GM12878 (cell line): ENCODE measurements at regions of chr3 and their contacts with region 1.

Region 1: GRCh38 chr3:122305818-122306621 is 19.0 kb upstream of the CSTA start:
- DNase-seq: no peak
- ATAC-seq: peak; percentile 93
- H3K4me3 ChIP-seq: no peak overlapping the region
- H3K27ac ChIP-seq: no peak overlapping the region
- H3K4me1 ChIP-seq: peaks cover 30% of the 10 kb centered on the region
- H3K27me3 ChIP-seq: no peaks in the 10 kb centered on the region
- CTCF ChIP-seq: peak; percentile 30 to 57 (median 35); a peak in 4 of 6 replicates
- EP300 ChIP-seq: no peak
- POLR2A ChIP-seq: no peak
- RAD21 ChIP-seq: peak; percentile 62

Region 2: DNA sequence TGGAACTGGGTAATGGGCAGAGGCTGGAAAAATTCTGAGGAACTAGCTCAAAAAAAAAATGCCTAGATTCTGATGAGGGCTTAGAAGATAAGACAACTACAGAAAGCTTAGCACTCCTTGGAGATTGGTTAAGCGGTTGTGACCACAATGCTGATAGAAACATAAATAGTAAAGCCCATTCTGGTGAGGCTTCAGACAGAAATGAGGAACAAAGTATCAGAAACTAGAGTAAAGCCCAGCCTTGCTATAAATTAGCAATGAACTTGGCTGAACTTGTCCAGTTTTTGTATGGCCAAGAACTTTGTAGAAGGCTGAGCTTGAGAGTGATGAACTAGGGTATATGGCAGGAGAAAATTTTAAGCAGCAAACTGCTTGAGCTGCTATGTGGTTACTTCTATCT is 581.9 kb before region 1 on chr3:
- CTCF ChIA-PET with region 1: no interaction called
- POLR2A ChIA-PET with region 1: no interaction called
- RAD21 ChIA-PET with region 1: no interaction called
- SMC1A ChIA-PET with region 1: no interaction called
- in situ Hi-C with region 1: no loop called
- intact Hi-C with region 1: no loop called
- DNase-seq: peak; percentile 57
- ATAC-seq: peak; percentile 96
- H3K4me3 ChIP-seq: no peak overlapping the region
- H3K27ac ChIP-seq: no peak overlapping the region
- H3K4me1 ChIP-seq: peaks cover 11% of the 10 kb centered on the region
- H3K27me3 ChIP-seq: no peaks in the 10 kb centered on the region
- CTCF ChIP-seq: no peak
- EP300 ChIP-seq: no peak
- POLR2A ChIP-seq: no peak
- RAD21 ChIP-seq: no peak

Region 3: GRCh38 chr3:121979734-121980449 is 326.1 kb before region 1 on chr3:
- CTCF ChIA-PET with region 1: no interaction called
- POLR2A ChIA-PET with region 1: no interaction called
- RAD21 ChIA-PET with region 1: no interaction called
- SMC1A ChIA-PET with region 1: no interaction called
- in situ Hi-C with region 1: no loop called
- intact Hi-C with region 1: no loop called
- DNase-seq: no peak
- ATAC-seq: peak; percentile 85
- H3K4me3 ChIP-seq: no peak overlapping the region
- H3K27ac ChIP-seq: peak overlapping the region; percentile 58
- H3K4me1 ChIP-seq: peaks cover 15% of the 10 kb centered on the region
- H3K27me3 ChIP-seq: no peaks in the 10 kb centered on the region
- CTCF ChIP-seq: no peak
- EP300 ChIP-seq: no peak
- POLR2A ChIP-seq: no peak
- RAD21 ChIP-seq: no peak

Region 4: GRCh38 chr3:122258757-122259371 is 47.2 kb before region 1 on chr3:
- CTCF ChIA-PET with region 1: interaction called, 16 read pairs
- POLR2A ChIA-PET with region 1: interaction called, 4 read pairs
- RAD21 ChIA-PET with region 1: interaction called, 41 read pairs
- SMC1A ChIA-PET with region 1: interaction called, 204 read pairs
- in situ Hi-C with region 1: no loop called
- intact Hi-C with region 1: no loop called
- DNase-seq: peak; percentile 83
- ATAC-seq: peak; percentile 86
- H3K4me3 ChIP-seq: no peak overlapping the region
- H3K27ac ChIP-seq: peak overlapping the region; percentile 5; the same call in 1 of the 2 replicates
- H3K4me1 ChIP-seq: peaks cover 5% of the 10 kb centered on the region; the same call in 1 of the 2 replicates
- H3K27me3 ChIP-seq: no peaks in the 10 kb centered on the region
- CTCF ChIP-seq: peak; percentile 75 to 91 (median 88)
- EP300 ChIP-seq: peak; percentile 19 to 58; a peak in 1 of 4 replicates
- POLR2A ChIP-seq: no peak
- RAD21 ChIP-seq: peak; percentile 97

Region 5: DNA sequence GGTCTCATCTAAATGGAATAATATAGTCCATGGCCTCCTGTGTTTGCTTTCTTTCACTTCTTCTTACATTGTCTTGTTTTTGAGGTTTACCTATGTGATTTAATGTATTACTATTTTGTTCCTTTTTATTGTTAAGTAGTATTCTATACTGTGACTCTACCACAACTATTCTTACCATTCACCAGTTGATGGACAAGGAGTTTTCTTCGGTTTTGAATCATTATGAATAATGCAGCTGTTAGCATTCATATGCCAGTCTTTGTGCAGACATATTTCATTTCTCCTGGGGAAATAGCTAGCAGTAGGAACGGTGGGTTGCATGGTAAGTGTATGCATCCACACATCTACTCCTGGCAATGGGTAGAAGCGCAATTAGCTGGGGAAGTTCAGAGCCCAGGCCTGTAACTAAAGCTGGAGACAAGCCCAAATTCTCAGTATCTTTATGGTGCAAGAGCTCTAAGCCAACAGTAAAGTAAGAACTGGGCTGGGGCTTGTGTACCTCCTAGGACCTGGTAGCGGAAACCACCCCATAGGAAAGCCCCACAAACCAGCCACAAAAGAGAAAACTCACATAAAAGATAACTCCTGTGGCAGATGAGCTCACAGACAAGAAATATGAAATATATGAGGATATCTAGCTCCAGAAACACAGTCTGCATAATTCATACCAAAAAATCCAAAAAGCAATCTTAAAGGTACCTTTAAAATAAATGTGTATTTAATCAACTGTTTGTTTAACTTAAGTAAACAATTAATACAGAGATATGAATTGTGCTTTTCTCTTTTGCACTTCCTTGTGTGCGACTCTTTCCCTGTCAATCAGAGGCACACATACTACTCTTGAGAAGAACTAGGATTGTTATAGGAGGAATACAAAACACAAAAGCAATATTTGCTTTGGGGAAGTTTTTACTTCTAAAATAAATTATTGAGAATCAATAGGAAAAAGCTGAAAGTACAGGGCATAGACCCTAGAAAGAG is 16.4 kb after region 1 on chr3:
- CTCF ChIA-PET with region 1: interaction called, 80 read pairs
- POLR2A ChIA-PET with region 1: interaction called, 26 read pairs
- RAD21 ChIA-PET with region 1: interaction called, 72 read pairs
- SMC1A ChIA-PET with region 1: interaction called, 65 read pairs
- in situ Hi-C with region 1: no loop called
- intact Hi-C with region 1: loop called (anchors 2 kb)
- DNase-seq: no peak
- ATAC-seq: peak; percentile 92
- H3K4me3 ChIP-seq: no peak overlapping the region
- H3K27ac ChIP-seq: peak overlapping the region; percentile 84
- H3K4me1 ChIP-seq: peaks cover 37% of the 10 kb centered on the region
- H3K27me3 ChIP-seq: no peaks in the 10 kb centered on the region
- CTCF ChIP-seq: no peak
- EP300 ChIP-seq: no peak; a peak in 1 of 4 replicates
- POLR2A ChIP-seq: no peak
- RAD21 ChIP-seq: no peak

Region 6: DNA sequence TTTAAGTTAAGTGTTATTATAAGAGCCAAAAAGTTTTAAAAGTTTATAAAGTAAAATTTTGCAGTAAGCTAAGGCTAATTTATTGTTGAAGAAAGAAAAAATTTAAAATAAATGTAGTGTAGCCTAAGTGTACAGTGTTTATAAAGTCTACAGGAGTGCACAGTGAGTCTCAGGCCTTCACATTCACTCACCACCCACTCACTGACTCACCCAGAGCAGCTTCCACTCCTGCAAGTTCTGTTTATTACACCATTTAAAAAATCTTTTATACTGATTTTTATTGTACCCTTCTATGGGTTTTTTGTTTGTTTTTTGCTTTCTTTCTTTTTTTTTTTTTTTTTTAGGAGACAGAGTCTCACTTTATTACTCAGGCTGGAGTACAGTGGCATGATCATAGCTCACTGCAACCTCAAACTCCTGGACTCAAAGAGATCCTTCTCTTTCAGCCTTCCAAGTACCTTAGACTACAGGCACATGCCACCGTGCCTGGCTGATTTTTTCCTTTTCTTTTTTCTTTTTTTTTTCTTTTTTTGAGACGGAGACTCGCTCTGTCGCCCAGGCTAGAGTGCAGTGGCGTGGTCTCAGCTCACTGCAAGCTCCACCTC is 44.9 kb after region 1 on chr3:
- CTCF ChIA-PET with region 1: interaction called, 192 read pairs
- POLR2A ChIA-PET with region 1: interaction called, 4 read pairs
- RAD21 ChIA-PET with region 1: interaction called, 114 read pairs
- SMC1A ChIA-PET with region 1: interaction called, 191 read pairs
- in situ Hi-C with region 1: no loop called
- intact Hi-C with region 1: loop called (anchors 1 kb)
- DNase-seq: no peak
- ATAC-seq: no peak
- H3K4me3 ChIP-seq: no peak overlapping the region
- H3K27ac ChIP-seq: no peak overlapping the region
- H3K4me1 ChIP-seq: no peaks in the 10 kb centered on the region
- H3K27me3 ChIP-seq: no peaks in the 10 kb centered on the region
- CTCF ChIP-seq: no peak
- EP300 ChIP-seq: no peak
- POLR2A ChIP-seq: no peak
- RAD21 ChIP-seq: no peak

Region 7: DNA sequence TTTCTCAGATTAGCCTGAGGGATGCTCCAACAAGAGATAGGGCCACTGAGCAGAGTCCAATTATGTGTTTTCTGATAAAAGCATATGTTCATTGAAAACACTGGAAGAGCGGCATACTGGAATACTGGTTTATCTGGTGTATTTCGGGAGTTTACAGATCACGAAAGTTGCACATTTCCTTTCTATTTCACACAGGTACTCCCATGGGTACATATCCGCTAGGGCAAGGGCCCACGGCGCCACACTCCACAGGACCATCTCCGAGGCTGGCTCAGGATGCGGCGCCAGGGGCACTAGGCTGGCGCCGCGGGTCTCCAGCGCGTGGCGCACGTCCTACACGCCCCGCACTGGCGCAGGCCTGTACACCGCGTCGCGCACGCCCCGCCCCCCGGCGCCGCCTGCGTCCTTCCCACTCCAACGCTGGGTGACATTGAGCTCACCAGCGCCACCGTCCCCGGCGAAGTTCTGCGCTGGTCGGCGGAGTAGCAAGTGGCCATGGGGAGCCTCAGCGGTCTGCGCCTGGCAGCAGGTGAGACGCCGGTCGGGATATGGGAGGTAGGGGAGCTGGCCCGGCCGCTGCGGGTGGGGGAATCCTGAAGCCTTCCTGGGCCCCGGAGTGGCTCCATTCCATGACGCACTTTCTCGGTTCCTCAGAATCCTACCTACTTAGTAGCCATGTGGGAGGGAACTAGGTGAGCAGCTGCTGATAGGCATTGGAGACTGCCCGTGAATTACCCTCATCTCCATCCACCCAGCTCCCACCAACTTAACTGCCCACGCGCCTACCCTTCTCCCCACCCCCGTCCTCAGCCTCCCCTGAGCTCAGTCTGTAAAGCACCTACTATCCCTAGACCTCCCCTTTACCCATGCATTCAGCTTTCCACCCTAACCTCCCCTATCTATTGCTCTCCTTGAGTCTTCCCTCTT is 78.0 kb after region 1 on chr3 and contains the start of gene FAM162A:
- CTCF ChIA-PET with region 1: interaction called, 78 read pairs
- POLR2A ChIA-PET with region 1: interaction called, 14 read pairs
- RAD21 ChIA-PET with region 1: interaction called, 56 read pairs
- SMC1A ChIA-PET with region 1: interaction called, 59 read pairs
- in situ Hi-C with region 1: no loop called
- intact Hi-C with region 1: loop called (anchors 5 kb)
- DNase-seq: peak; percentile 83
- ATAC-seq: peak; percentile 95
- H3K4me3 ChIP-seq: peak within 1 kb of the TSS; percentile 76
- H3K27ac ChIP-seq: peak within 1 kb of the TSS; percentile 82
- H3K4me1 ChIP-seq: peaks cover 16% of the 10 kb centered on the region
- H3K27me3 ChIP-seq: no peaks in the 10 kb centered on the region
- CTCF ChIP-seq: peak; percentile 55 to 77 (median 61); a peak in 5 of 6 replicates
- EP300 ChIP-seq: peak in 1 of 2 experiments; percentile 8; a peak in 1 of 4 replicates
- POLR2A ChIP-seq: peak; percentile 96
- RAD21 ChIP-seq: peak; percentile 38
- polyA plus RNA-seq, gene FAM162A: 290 to 297 TPM

Region 8: DNA sequence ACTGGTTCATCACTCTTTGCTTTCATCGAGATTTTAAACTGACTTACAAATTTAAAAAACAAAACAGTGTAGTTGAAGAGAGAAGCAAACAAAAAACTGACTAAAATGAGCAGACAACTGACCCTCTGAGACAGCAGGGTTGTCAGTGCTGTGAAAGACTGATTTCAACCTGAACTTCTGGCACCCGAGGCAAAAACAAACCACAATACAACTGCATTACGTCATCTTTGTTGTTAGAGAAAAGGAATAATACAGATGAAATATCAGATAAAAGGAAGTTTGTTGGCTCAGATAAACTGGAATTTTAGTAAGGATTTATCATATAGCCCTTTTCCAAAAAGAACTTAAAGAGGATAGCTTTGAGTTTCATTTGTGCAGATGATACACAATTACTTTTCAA is 322.5 kb after region 1 on chr3:
- CTCF ChIA-PET with region 1: no interaction called
- POLR2A ChIA-PET with region 1: no interaction called
- RAD21 ChIA-PET with region 1: no interaction called
- SMC1A ChIA-PET with region 1: no interaction called
- in situ Hi-C with region 1: no loop called
- intact Hi-C with region 1: no loop called
- DNase-seq: no peak
- ATAC-seq: no peak
- H3K4me3 ChIP-seq: no peak overlapping the region
- H3K27ac ChIP-seq: no peak overlapping the region
- H3K4me1 ChIP-seq: peaks cover 14% of the 10 kb centered on the region
- H3K27me3 ChIP-seq: no peaks in the 10 kb centered on the region
- CTCF ChIP-seq: no peak
- EP300 ChIP-seq: no peak
- POLR2A ChIP-seq: no peak
- RAD21 ChIP-seq: no peak

Region 9: DNA sequence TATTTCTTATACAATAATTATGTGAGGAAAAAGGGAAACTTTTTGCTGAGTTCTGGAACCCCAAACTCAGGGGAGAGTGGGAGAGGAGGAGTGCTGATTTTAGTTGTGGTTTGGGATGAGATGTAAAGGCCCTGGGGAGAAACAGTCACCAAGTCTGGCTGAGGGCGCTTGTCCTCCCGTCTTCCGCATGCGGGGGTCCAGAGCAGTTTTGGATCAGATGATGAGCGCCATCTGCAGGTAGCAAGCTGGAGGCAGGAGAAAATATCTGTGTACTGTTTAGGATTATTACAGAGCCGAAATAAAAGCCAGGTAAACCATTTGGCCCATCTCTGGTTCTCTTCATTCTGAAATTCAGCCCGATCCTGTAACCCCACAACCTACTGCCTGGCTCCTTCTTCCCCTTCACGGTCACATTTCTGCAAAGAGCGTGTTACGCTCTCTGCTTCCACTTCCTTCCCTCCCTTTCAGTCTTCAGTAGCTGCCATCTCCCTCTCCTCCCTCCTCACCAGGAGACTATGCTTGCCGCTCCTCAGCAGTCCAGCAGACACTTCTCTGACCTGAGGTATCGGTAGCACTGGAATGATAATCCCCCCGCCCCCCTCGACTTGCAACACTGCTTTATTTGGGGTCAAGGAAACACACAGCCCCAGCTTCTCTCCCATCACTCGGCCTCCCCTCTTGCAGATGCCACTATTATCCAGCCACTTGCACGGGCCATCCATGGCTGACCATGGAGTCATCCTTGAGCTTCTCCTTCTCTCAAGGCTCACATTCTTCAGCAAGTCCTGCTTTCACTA is 373.3 kb after region 1 on chr3:
- CTCF ChIA-PET with region 1: interaction called, 12 read pairs
- POLR2A ChIA-PET with region 1: no interaction called
- RAD21 ChIA-PET with region 1: interaction called, 18 read pairs
- SMC1A ChIA-PET with region 1: interaction called, 6 read pairs
- in situ Hi-C with region 1: no loop called
- intact Hi-C with region 1: no loop called
- DNase-seq: no peak
- ATAC-seq: peak; percentile 70
- H3K4me3 ChIP-seq: peak overlapping the region; percentile 97
- H3K27ac ChIP-seq: peak overlapping the region; percentile 97
- H3K4me1 ChIP-seq: peaks cover 16% of the 10 kb centered on the region
- H3K27me3 ChIP-seq: no peaks in the 10 kb centered on the region
- CTCF ChIP-seq: peak; percentile 75 to 91 (median 80)
- EP300 ChIP-seq: peak in 1 of 2 experiments; percentile 6; a peak in 1 of 4 replicates
- POLR2A ChIP-seq: no peak
- RAD21 ChIP-seq: peak; percentile 95